Pancreas (tissue), 10 donors: ENCODE measurements at regions of chr18 and their contacts with region 1.

Region 1: GRCh38 chr18:35949903-35950627 is 22.4 kb upstream of the RMP24 start:
- DNase-seq: peak; percentile 20 to 77 (median 46)
- ATAC-seq: peak; percentile 86 to 97 (median 94)
- H3K4me3 ChIP-seq: peak overlapping the region; percentile 33 to 65 (median 42)
- H3K27ac ChIP-seq: no peak overlapping the region
- H3K4me1 ChIP-seq: no peaks in the 10 kb centered on the region
- H3K27me3 ChIP-seq: no peaks in the 10 kb centered on the region
- CTCF ChIP-seq: peak; percentile 80 to 96 (median 96)

Region 2: GRCh38 chr18:35386600-35387351 is 563.3 kb before region 1 on chr18:
- intact Hi-C with region 1: loop called in 1 of 3 experiments (anchors 5 kb)
- DNase-seq: peak in 4 of 6 donors; percentile 39 to 56 (median 50)
- ATAC-seq: peak; percentile 77 to 96 (median 90)
- H3K4me3 ChIP-seq: no peak overlapping the region
- H3K27ac ChIP-seq: no peak overlapping the region
- H3K4me1 ChIP-seq: peaks cover 0 to 4% (median 0%) of the 10 kb centered on the region in 3 donors
- H3K27me3 ChIP-seq: no peaks in the 10 kb centered on the region
- CTCF ChIP-seq: peak; percentile 56 to 83 (median 82)

Region 3: GRCh38 chr18:35407871-35408481 is 542.1 kb before region 1 on chr18:
- intact Hi-C with region 1: loop called in 1 of 3 experiments (anchors 5 kb)
- DNase-seq: peak in 3 of 6 donors; percentile 26 to 51 (median 41)
- ATAC-seq: peak; percentile 91 to 98 (median 96)
- H3K4me3 ChIP-seq: no peak overlapping the region
- H3K27ac ChIP-seq: no peak overlapping the region
- H3K4me1 ChIP-seq: no peaks in the 10 kb centered on the region
- H3K27me3 ChIP-seq: peaks cover 0 to 3% (median 1%) of the 10 kb centered on the region in 4 donors
- CTCF ChIP-seq: peak; percentile 59 to 74 (median 66)

Region 4: DNA sequence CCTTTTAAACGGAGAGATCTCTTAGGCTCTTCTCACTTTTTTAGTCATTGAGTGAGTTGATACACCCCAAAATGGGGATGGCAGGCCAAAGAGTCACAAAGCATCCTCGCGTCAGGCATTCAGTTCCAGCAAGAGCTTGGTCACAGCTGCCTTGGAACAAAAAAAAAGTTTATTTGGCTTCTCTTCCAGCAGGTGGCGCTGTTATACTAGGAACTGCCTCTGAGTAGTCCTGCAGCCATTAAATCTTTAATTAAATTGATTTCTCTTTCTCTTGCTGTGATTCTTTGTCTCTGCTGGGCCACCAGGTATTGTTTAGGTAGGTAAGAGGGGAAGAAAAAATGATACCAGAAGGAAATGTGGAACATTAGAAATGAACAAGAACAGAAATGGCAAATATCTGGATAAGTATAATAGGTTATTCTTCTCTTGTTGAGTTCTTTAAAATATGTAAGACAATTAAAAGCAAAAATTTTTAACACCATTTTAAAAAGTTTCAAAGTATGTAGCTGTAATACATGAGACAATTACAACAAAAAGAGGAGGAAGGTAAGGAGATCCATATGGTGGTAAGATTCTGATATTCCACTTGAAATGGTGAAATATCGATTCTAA is 193.5 kb before region 1 on chr18:
- intact Hi-C with region 1: loop called in 2 of 3 experiments (anchors 10 kb)
- DNase-seq: peak in 3 of 6 donors; percentile 27 to 55 (median 47)
- ATAC-seq: peak; percentile 82 to 89 (median 86)
- H3K4me3 ChIP-seq: no peak overlapping the region
- H3K27ac ChIP-seq: no peak overlapping the region
- H3K4me1 ChIP-seq: no peaks in the 10 kb centered on the region
- H3K27me3 ChIP-seq: no peaks in the 10 kb centered on the region
- CTCF ChIP-seq: peak; percentile 56 to 84 (median 76)

Region 5: GRCh38 chr18:36511791-36512352 is 561.8 kb after region 1 on chr18:
- intact Hi-C with region 1: no loop called
- DNase-seq: no peak
- ATAC-seq: peak in 3 of 4 donors; percentile 14 to 53 (median 31)
- H3K4me3 ChIP-seq: no peak overlapping the region
- H3K27ac ChIP-seq: no peak overlapping the region
- H3K4me1 ChIP-seq: peaks cover 0 to 3% (median 0%) of the 10 kb centered on the region in 3 donors
- H3K27me3 ChIP-seq: no peaks in the 10 kb centered on the region
- CTCF ChIP-seq: no peak